ENCODE measurements at regions of chr20 and their contacts with region 1.

Region 1: DNA sequence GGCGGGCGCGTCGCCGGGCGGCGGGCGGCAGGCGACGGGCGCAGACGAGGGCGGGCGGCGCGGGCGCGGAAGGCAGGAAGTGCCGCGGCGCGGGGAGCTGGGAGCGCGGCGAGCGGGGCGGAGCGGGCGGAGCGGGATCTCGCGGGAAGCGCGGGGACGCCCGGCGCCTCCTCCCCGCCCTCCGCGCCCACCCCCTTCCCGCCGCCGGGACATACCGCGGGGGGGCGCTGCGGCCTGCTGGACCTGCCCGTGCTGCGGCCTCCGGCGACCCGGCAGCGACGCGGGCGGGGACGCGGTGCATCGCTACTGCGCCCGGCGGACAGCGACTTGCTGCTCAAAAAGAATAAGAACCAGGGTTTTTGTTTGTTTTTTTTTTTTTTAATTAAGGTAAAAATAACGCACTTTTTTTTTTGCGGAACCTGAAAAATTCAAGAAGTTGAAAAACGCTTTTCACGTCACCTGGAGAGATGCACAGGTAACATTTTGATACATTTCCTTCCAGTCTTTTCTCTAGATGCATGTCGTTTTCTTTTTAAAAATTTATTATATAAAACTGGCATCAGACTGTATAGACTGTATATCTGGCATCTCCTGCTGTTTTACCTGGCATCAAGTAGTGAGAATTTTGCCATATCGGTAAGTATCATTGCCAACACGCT is at the start of gene CENPB:
- DNase-seq: peak; percentile 94
- H3K4me3 ChIP-seq: peak within 1 kb of the TSS; percentile 20 to 61 (median 48)
- H3K27ac ChIP-seq: peak within 1 kb of the TSS; percentile 80 to 84 (median 82)
- H3K4me1 ChIP-seq: peaks cover 26 to 50% (median 38%) of the 10 kb centered on the region in 4 donors
- H3K27me3 ChIP-seq: no peaks in the 10 kb centered on the region
- CTCF ChIP-seq: peak; percentile 58 to 91 (median 76)
- EP300 ChIP-seq: no peak
- POLR2A ChIP-seq: no peak
- total RNA-seq, gene CENPB: 66.6 to 83.1 (median 72.8) TPM

Region 2: GRCh38 chr20:3209257-3209945 is 577.4 kb before region 1 on chr20 and contains the start of gene ITPA:
- in situ Hi-C with region 1: no loop called
- intact Hi-C with region 1: no loop called
- DNase-seq: peak; percentile 56
- H3K4me3 ChIP-seq: peak within 1 kb of the TSS; percentile 73 to 85 (median 79)
- H3K27ac ChIP-seq: peak within 1 kb of the TSS; percentile 82 to 90 (median 86)
- H3K4me1 ChIP-seq: peaks cover 0 to 19% (median 15%) of the 10 kb centered on the region in 4 donors
- H3K27me3 ChIP-seq: no peaks in the 10 kb centered on the region
- CTCF ChIP-seq: peak in 1 of 5 experiments; percentile 13
- EP300 ChIP-seq: no peak
- POLR2A ChIP-seq: peak; percentile 15
- total RNA-seq, gene ITPA: 15.0 to 95.7 (median 39.6) TPM

Region 3: DNA sequence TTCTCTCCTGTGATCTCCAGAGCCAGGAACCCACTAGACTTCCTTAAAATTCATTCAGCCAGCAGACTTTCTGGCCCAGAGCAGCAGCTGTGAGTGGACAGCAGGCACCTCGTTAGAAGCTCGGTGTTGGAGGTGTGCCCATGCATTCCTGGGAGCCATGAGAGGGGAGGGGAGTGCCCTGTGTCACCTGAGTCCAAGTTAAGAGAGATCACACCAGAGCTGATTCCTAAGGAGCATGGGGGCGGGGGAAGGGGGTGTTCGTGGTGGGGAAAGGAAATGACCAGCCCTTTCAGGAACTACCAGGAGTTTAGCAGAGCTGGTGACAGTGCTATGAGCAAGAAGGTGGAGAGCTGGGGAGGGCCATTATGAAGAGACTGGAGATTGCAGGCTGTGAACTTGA is 170.5 kb before region 1 on chr20:
- in situ Hi-C with region 1: no loop called
- intact Hi-C with region 1: no loop called
- DNase-seq: no peak
- H3K4me3 ChIP-seq: no peak overlapping the region
- H3K27ac ChIP-seq: no peak overlapping the region
- H3K4me1 ChIP-seq: no peaks in the 10 kb centered on the region
- H3K27me3 ChIP-seq: no peaks in the 10 kb centered on the region
- CTCF ChIP-seq: no peak
- EP300 ChIP-seq: no peak
- POLR2A ChIP-seq: no peak

Region 4: DNA sequence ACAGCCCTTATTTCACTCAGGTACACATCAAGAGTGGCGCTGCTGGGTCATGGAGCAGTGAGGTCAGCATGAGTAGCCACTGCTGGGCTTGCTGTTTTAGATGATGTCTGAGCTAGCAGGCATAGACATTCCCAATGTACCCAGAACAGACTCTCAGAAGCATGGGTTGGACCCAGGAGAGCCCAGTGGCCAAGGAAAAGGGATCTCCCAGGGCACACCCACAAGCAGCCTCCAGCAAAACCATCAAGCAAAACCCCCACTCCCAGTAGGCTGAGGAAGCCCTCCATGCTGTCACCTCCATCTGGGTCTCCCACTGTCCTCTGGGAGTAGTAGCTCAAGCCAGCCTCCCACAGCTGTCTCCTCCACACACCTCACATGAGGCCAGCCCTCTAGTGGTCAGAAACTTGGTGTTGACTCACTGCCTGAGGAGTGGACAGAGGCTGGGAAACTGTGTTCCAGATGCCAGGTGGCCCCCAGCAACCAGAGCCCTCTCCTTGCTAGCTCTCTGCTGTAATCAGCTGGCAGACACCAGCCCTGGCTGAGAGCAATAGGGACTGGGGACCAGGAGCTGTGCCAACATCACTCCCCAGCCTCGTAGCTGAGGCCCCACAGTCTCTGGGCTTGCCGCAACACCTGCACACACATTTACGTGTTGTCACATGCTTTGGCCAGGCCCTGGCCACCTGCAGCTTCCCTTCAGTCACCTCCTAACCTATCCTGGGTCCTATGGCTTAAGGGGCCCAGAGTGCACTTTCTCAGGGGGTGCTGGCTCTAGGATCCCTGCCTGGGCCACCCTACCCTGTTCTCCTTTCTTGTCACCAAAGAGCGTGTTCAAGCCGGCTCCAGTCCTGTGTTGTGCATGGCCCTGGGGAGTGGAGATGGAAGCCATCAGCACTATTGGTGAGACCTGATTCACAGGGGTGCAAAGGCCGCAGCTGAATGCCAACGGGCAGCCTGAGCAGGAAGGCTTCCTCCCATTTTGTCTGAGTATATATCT is 31.7 kb after region 1 on chr20:
- in situ Hi-C with region 1: no loop called
- intact Hi-C with region 1: loop called (anchors 2 kb)
- DNase-seq: peak; percentile 82
- H3K4me3 ChIP-seq: no peak overlapping the region
- H3K27ac ChIP-seq: peak overlapping the region; percentile 95 to 97 (median 96)
- H3K4me1 ChIP-seq: peaks cover 17 to 32% (median 28%) of the 10 kb centered on the region in 4 donors
- H3K27me3 ChIP-seq: no peaks in the 10 kb centered on the region
- CTCF ChIP-seq: peak; percentile 63 to 85 (median 71)
- EP300 ChIP-seq: no peak
- POLR2A ChIP-seq: no peak

Measured in transverse colon (tissue), 4 donors.